Heart left ventricle (tissue), 16 donors: ENCODE measurements at regions of chr3 and their contacts with region 1.

Region 1: DNA sequence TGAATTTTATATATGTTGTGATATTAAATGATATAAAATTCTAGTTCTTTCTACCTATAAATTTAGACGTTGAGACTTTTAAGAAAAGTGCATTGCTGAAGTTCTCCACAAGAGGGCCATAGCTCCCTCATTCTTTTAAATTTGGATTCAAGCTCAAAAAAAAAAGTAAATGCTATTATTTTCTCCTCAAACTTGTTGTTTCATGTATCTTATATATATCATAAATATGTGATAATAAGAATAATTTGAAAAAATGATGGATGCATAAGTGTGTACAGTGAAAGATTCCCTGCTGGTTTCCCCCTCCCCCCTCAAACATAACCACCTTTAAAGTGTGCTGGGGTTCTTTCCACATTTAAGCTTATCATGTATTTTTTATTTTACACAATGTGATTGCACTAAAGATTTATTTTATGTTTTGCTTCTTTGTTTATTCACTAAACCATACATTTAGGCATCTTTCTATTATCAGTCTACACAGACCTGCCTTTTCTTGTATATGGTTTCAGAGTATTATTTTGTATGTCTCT is 769.4 kb upstream of the GOLIM4 start:
- DNase-seq: no peak
- ATAC-seq: no peak
- H3K4me3 ChIP-seq: peak overlapping the region in 4 of 12 donors; percentile 5 to 35 (median 17)
- H3K27ac ChIP-seq: no peak overlapping the region
- H3K4me1 ChIP-seq: no peaks in the 10 kb centered on the region
- H3K27me3 ChIP-seq: no peaks in the 10 kb centered on the region
- CTCF ChIP-seq: peak; percentile 61 to 90 (median 77)
- POLR2A ChIP-seq: no peak

Region 2: GRCh38 chr3:168884353-168884903 is 19.3 kb after region 1 on chr3:
- intact Hi-C with region 1: loop called in 1 of 10 experiments (anchors 1 kb)
- DNase-seq: peak in 3 of 5 donors; percentile 38 to 57 (median 39)
- ATAC-seq: peak in 3 of 4 donors; percentile 64 to 78 (median 67)
- H3K4me3 ChIP-seq: no peak overlapping the region
- H3K27ac ChIP-seq: no peak overlapping the region
- H3K4me1 ChIP-seq: peaks cover 0 to 24% (median 7%) of the 10 kb centered on the region in 12 donors
- H3K27me3 ChIP-seq: no peaks in the 10 kb centered on the region
- CTCF ChIP-seq: no peak
- POLR2A ChIP-seq: no peak

Region 3: DNA sequence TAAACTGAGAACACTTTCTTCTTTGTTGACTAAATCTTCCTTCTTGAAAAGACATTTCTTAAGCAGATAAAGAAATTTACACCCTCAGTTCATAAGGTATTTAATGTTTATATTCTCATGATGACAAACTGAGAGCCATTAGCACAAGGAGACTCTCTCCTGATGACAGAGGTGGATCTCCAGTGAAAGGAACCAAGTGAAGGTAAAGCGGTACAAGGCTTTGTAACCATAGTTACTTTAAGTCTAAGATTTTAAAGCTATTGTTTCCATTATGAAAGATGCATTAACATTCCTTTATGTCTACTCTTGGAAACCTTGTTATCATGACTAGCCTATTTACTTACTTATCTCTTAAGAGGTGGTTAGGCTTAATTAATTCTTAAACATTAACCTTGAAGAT is 61.3 kb after region 1 on chr3:
- intact Hi-C with region 1: no loop called
- DNase-seq: no peak
- ATAC-seq: no peak
- H3K4me3 ChIP-seq: no peak overlapping the region
- H3K27ac ChIP-seq: no peak overlapping the region
- H3K4me1 ChIP-seq: no peaks in the 10 kb centered on the region
- H3K27me3 ChIP-seq: no peaks in the 10 kb centered on the region
- CTCF ChIP-seq: no peak
- POLR2A ChIP-seq: no peak

Region 4: GRCh38 chr3:169034401-169034800 is 169.3 kb after region 1 on chr3:
- intact Hi-C with region 1: loop called in 2 of 10 experiments (anchors 10 kb)
- DNase-seq: no peak
- ATAC-seq: no peak
- H3K4me3 ChIP-seq: no peak overlapping the region
- H3K27ac ChIP-seq: no peak overlapping the region
- H3K4me1 ChIP-seq: no peaks in the 10 kb centered on the region
- H3K27me3 ChIP-seq: no peaks in the 10 kb centered on the region
- CTCF ChIP-seq: no peak
- POLR2A ChIP-seq: no peak